Sciatic nerve (tissue), 2 donors: ENCODE measurements at regions of chr16 and their contacts with region 1.

Region 1: GRCh38 chr16:19086322-19087199 is 19.1 kb downstream of the COQ7 start:
- DNase-seq: peak; percentile 90
- ATAC-seq: peak; percentile 98

Region 2: DNA sequence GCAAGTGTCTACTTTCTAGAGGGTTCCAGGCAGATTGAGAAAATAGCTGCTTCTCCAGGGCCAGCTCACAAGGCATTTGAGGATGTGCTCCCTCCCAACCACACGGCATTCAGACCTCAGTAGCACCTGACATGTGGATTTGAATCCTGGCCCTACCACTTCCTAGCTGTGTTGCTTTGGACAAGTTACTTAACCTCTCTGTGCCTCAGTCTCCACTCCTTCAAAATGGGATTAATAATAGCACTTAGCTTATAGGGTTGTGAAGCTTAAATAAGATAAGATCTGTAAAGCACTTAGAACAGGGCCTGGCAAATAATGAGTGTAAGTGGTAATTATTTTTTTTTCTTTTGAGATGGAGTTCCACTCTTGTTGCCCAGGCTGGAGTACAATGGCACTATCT is 503.7 kb before region 1 on chr16:
- intact Hi-C with region 1: no loop called
- DNase-seq: no peak
- ATAC-seq: no peak

Region 3: DNA sequence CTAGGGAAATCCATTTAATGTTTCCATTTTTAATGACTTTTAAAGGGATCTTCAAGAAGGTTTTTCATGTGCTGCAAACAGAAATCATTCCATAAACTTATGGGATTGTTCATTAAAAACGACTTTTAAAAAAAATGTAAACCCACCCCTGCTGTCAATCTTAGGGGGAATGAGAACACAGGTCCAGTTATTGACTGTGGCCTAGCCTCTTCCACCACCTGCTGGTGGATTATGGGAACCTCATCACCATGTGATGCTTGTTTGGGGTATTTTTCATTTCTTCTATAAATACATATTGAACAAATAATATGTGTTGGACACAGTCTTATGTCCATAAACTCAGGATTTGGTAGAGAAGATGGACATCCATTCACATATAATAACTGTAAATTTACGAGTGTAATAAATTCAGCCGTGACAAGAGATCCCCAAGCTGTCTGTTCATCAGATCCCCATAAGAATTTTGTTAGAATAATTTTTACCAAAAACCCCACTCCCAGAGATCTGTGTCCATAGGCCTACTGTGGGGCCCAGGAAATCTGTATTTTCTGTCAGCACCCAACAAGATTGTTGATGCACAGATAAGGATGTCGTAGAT is 289.1 kb after region 1 on chr16:
- intact Hi-C with region 1: loop called (anchors 5 kb)
- DNase-seq: peak; percentile 63
- ATAC-seq: peak; percentile 78

Region 4: DNA sequence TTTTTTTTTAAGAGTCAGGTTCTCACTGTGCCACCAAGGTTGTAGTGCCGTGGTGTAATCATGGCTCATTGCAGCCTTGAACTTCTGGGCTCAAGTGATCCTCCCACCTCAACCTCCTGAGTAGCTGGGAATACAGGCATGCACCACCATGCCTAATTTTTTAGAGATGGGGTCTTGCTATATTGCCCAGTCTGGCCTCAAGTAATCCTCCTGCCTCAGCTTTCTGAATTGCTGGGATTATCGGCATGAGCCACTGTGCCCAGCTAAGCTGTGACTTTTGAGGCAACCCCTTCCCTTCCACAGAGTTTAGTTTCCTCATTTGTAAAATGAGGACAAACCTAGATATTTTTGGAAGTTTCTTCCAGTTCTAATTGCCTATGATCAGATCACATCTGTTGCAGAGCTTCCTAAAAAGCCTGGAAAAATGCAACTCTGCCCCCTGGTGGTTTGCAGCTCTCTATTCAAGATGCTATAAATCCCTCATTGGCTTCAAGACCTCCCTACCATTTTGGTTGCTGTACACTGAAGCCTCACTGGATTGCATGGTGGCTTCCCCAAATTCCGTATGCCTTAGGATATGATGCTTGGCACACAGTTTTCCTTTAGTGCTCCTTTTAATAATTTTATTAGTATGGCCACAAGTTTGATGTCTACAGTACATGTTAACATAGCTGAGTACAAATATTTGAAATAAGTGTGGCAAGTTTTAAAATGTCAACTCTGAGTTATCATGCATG is 416.0 kb after region 1 on chr16:
- intact Hi-C with region 1: loop called (anchors 10 kb)
- DNase-seq: peak; percentile 85
- ATAC-seq: peak; percentile 72

Region 5: GRCh38 chr16:19831678-19832077 is 745.1 kb after region 1 on chr16:
- intact Hi-C with region 1: no loop called
- DNase-seq: no peak
- ATAC-seq: no peak

Region 6: GRCh38 chr16:20023190-20023589 is 936.6 kb after region 1 on chr16:
- intact Hi-C with region 1: no loop called
- DNase-seq: no peak
- ATAC-seq: no peak